ENCODE measurements at regions of chr2 and their contacts with region 1.

Region 1: GRCh38 chr2:68734688-68735525 is at the start of gene ARHGAP25:
- DNase-seq: peak; percentile 44
- CTCF ChIP-seq: peak; percentile 17

Region 2: DNA sequence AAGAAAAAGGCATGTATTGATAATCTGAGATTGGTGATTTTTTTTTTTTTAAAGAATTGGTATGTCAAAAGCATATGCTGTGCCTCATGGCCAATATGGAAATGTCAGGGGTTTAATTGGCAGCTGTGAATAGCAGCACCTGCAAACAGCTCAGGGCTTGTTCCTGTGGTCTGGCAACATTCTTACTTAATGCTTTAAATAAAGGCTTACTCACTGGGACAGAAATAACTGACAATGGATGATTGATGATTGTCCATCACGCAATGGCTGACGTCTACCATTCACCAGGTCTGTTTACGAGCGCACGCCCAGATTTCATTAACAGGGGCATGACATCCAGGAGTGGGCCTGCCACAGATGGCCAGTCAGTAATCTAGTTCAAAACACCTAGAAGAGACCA is 1271.1 kb before region 1 on chr2:
- CTCF ChIA-PET with region 1: no interaction called
- POLR2A ChIA-PET with region 1: no interaction called
- DNase-seq: no peak
- CTCF ChIP-seq: no peak

Region 3: GRCh38 chr2:68715353-68716041 is 19.4 kb before region 1 on chr2:
- CTCF ChIA-PET with region 1: interaction called, 23 read pairs
- POLR2A ChIA-PET with region 1: no interaction called
- DNase-seq: peak; percentile 49
- CTCF ChIP-seq: peak; percentile 66

Region 4: GRCh38 chr2:68721482-68722101 is 13.3 kb before region 1 on chr2:
- CTCF ChIA-PET with region 1: interaction called, 23 read pairs
- POLR2A ChIA-PET with region 1: no interaction called
- DNase-seq: no peak
- CTCF ChIP-seq: no peak

Measured in GM10248 (cell line).